ENCODE measurements at regions of chr1 and their contacts with region 1.

Region 1: DNA sequence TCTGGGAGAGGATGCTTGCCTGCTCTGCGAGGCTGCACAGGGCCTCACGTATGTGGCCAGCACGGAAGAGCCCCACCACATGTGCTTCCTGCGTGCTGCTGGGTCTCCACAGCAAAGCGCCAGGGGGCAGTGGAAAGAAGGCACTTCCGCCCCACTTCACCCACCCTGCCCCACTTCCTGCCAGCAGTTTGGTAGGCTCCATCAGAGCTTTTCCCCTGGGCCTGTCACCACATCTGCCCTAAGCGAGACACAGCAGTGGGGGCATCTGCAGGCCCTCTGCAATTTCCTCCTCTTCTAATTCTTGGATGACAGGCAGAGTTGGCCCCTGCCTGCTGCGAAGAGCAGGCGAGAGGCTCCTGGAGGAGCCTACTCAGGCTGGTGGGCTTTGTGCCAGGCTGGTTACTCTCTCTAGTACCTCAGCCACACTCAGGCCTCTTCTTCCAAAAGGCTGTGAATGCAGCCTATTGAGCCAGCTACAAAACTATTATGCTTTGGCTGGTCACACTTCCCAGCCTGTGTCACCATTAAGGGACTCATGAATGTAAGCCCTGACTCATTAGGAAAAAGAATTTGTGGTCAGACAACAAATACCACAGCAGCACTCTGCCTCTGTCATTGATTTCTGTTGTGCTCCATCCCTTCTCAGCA is 25.0 kb downstream of the CD244 start:
- DNase-seq: no peak
- ATAC-seq: peak in 3 of 4 donors; percentile 29 to 66 (median 49)
- H3K4me3 ChIP-seq: no peak overlapping the region
- H3K27ac ChIP-seq: no peak overlapping the region
- H3K4me1 ChIP-seq: no peaks in the 10 kb centered on the region
- H3K27me3 ChIP-seq: no peaks in the 10 kb centered on the region
- CTCF ChIP-seq: no peak

Region 2: DNA sequence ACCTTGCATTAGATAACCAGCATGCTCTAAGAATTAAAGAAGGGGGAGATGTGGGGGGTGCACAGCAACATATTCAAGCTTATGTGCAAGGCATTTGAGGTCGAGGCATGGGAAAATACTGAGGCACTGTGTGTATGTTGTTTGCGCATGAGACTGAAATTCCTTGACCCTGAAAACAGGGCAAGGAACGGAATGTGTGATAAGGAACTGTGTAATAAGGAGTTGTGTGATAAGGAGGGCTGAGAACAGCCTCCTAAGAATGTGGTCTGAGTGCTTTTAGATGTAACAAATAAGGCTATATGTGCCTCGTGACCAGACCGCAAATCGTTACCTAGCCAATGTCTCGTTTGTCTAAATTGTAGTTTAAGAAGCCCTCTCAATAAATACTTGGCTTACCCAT is 73.8 kb after region 1 on chr1:
- intact Hi-C with region 1: no loop called
- DNase-seq: peak in 2 of 6 donors; percentile 20 to 23
- ATAC-seq: peak in 3 of 4 donors; percentile 62 to 78 (median 74)
- H3K4me3 ChIP-seq: no peak overlapping the region
- H3K27ac ChIP-seq: no peak overlapping the region
- H3K4me1 ChIP-seq: peaks cover 0 to 3% (median 0%) of the 10 kb centered on the region in 3 donors
- H3K27me3 ChIP-seq: no peaks in the 10 kb centered on the region
- CTCF ChIP-seq: no peak

Region 3: DNA sequence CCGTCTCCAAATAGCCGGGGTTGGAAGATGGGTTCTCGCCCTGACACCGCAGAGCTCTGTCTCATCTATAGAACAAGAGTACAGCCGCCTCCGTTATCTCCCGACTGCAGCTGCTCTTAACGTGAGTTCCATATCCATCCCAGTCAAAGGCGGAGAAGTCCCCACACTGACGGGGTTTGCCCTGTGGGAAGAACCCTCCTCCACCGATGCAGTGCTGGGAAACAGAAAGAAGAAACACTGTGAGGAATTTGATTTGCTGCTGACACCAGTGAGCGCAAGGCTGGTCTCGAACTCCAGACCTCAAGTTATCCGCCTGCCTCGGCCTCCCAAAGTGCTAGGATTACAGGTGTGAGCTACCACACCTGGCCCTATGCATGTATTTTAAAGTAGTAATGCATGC is 107.4 kb after region 1 on chr1:
- intact Hi-C with region 1: loop called in 2 of 3 experiments (anchors 5 kb)
- DNase-seq: no peak
- ATAC-seq: no peak
- H3K4me3 ChIP-seq: no peak overlapping the region
- H3K27ac ChIP-seq: no peak overlapping the region
- H3K4me1 ChIP-seq: no peaks in the 10 kb centered on the region
- H3K27me3 ChIP-seq: no peaks in the 10 kb centered on the region
- CTCF ChIP-seq: no peak

Region 4: DNA sequence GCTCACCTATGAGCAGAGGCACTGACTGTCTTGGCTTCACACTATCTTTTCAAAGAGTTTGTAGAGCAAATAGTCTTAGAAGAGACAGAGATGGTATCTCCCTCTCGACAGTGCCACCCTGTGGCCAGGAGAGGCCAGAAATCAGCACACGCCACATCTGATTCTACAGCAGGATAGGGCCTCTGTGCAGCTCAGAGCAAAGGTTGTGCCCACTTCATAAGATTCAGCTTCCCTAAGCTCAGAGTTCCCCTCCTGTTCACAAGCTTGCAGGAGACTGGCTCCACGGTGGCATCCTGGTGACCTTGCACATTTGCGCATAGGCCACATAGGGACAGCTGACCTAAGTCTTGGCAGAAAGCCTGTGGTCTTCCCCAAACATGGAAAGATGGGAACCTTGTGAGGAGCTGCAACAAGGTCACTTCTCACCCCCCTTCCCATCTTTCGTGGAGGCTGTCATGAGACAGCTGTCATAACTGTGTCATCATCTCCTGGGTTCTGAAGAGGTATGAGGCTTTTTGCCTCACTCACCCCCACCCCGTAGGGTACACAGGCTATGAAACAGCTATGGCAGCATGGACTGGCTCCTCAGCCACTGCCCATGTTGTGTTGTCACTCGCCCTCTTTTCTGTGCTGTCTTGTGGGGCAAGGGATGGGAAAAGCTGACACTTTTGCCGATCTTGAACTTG is 113.9 kb after region 1 on chr1:
- intact Hi-C with region 1: loop called in 2 of 3 experiments (anchors 5 kb)
- DNase-seq: peak in 5 of 6 donors; percentile 30 to 74 (median 54)
- ATAC-seq: peak; percentile 76 to 95 (median 92)
- H3K4me3 ChIP-seq: no peak overlapping the region
- H3K27ac ChIP-seq: no peak overlapping the region
- H3K4me1 ChIP-seq: no peaks in the 10 kb centered on the region
- H3K27me3 ChIP-seq: no peaks in the 10 kb centered on the region
- CTCF ChIP-seq: peak; percentile 40 to 67 (median 54)